ENCODE measurements at regions of chr22 and their contacts with region 1.

Region 1: GRCh38 chr22:19022755-19023154 is 86.7 kb upstream of the PRODH start:
- DNase-seq: no peak
- H3K4me3 ChIP-seq: no peak overlapping the region
- H3K27ac ChIP-seq: no peak overlapping the region
- H3K4me1 ChIP-seq: no peaks in the 10 kb centered on the region
- H3K27me3 ChIP-seq: no peaks in the 10 kb centered on the region
- CTCF ChIP-seq: no peak
- POLR2A ChIP-seq: no peak

Region 2: GRCh38 chr22:19060356-19061009 is 37.7 kb after region 1 on chr22:
- intact Hi-C with region 1: loop called (anchors 5 kb)
- DNase-seq: no peak
- H3K4me3 ChIP-seq: no peak overlapping the region
- H3K27ac ChIP-seq: no peak overlapping the region
- H3K4me1 ChIP-seq: no peaks in the 10 kb centered on the region
- H3K27me3 ChIP-seq: no peaks in the 10 kb centered on the region
- CTCF ChIP-seq: no peak
- POLR2A ChIP-seq: no peak

Region 3: GRCh38 chr22:19105867-19106802 is 83.4 kb after region 1 on chr22:
- intact Hi-C with region 1: no loop called
- DNase-seq: no peak
- H3K4me3 ChIP-seq: no peak overlapping the region
- H3K27ac ChIP-seq: peak overlapping the region in 1 of 2 donors; percentile 2
- H3K4me1 ChIP-seq: peaks cover 8 to 20% of the 10 kb centered on the region in 2 donors
- H3K27me3 ChIP-seq: no peaks in the 10 kb centered on the region
- CTCF ChIP-seq: no peak
- POLR2A ChIP-seq: no peak